ENCODE measurements at regions of chr2 and their contacts with region 1.

Region 1: DNA sequence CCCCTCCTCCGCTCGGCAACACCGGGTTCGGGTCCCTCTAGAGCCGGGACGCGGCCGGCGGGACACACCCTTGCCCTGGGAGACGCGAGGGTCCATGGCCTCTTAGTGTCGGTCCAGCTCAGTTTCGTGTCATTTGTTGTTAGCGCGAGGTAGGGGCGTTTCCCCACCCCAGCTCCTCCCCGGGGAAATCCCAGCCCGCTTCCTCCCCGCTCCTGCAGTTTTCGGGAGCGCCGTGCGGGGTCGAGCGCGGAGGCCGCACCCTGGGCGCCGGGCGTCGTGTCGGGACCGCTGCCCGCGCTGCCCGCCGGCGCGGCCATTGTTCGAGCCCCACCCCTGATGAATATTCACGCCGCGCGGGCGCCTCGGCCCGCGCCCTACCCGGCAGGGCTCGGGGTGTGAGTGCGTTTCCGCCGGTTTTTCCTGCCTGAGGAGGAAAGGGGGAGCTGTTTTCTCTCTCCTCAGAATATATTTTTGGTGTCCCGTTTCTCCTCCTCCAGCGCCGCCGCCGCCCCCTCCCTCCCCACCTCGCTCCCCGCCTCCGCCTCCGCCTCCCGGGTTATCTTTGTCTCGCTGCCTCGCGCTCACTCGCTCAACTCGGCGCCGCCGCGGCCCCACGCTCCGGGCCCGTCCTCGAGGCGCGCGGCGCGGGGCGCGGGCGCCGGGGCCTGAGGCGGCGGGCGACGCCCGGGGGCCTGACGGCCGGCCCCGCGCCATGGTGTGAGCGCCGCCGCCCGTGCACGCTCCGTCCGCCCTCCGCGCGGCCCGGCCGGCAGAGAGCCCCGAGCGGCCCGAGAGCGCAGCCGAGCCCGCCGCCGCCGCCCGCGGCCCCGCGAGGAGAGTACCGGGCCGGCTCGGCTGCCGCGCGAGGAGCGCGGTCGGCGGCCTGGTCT is at the start of gene MAP4K4:
- DNase-seq: peak; percentile 78
- H3K4me3 Mint-ChIP-seq: peak within 1 kb of the TSS; percentile 81
- H3K27ac Mint-ChIP-seq: peak within 1 kb of the TSS; percentile 75
- H3K4me1 Mint-ChIP-seq: peaks cover 18% of the 10 kb centered on the region
- H3K27me3 Mint-ChIP-seq: peaks cover 2% of the 10 kb centered on the region
- total RNA-seq, gene MAP4K4: 71.6 to 77.5 TPM

Region 2: DNA sequence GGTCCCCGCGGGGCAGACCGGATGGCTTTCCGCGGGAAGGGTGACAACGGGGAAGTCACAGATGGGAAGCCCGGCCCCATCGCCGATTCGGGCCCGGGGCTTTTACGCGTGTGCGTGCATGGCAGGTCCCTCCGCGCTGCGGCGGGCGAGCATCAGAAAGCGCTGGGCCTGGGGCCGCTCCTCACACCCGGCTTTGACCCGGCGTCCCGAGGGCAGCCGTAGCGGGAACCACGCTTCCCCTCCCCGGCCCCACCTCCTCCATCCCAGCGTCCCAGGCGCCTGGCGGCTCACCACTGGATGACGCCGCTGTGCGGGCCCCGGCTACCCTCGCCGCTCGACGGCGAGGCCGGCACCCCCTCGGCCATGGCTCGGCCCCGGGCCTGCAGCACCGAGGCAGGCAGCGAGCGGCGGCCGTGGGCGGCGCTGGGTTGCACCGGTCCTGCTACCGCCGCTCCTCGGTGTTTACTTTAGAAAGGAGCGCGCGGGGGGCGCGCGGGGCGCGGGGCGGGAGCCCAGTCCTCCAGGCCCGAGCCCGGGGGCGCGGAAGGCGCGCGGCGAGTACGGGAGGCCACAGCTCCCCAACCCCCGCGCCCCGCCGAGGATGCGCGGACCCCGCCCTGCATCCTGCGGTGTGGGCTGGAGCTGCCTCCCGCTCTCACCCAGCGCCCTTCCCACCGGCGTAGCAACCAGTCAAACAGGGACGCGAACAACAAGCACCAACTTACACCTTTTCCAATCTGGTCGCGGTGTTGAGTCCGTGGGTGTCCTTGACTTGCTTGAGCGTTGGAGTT is 223.3 kb before region 1 on chr2:
- CTCF ChIA-PET with region 1: no interaction called
- POLR2A ChIA-PET with region 1: interaction called, 31 read pairs
- DNase-seq: peak; percentile 59
- H3K4me3 Mint-ChIP-seq: peak overlapping the region; percentile 79
- H3K27ac Mint-ChIP-seq: peak overlapping the region; percentile 93
- H3K4me1 Mint-ChIP-seq: peaks cover 40% of the 10 kb centered on the region
- H3K27me3 Mint-ChIP-seq: no peaks in the 10 kb centered on the region

Region 3: DNA sequence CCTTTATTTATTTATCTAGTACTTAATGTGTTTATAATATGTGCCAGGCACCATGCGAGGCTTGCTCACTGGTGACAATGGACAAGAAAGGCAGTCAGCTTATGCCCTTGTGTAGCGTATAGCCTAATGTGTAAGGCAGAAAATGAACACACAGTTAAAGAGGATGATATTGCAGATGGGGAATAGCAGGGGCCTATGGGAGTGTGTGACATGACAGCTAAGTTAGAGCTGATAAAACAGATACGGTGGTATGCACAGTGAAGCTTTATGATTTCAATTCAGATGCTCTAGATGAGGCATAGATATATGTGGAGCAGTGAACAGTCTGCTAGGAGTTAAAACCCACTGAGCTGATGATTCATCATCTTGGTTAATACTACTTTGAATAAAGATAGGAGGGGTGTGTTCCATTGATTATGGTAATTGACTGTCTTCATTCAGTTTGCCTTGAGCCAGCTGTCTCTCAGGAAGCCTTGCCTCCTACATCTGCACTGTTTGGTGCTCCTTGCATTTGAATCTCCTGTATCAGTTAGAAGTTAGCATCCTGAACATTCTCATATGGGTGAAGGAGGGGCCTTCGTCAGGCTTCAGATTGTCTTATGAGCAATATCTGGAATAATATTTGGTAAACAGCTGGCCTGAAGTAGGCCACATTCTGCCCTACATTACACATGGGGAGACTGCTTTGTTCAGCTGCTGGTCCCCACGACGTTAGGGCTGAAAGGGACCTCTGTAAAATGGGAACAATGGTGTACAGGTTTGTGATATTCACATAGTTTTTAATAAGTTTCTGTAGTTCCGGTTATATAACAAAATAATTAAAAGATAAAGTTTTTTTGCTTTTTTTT is 13.3 kb after region 1 on chr2:
- CTCF ChIA-PET with region 1: interaction called, 11 read pairs
- POLR2A ChIA-PET with region 1: interaction called, 64 read pairs
- DNase-seq: no peak
- H3K4me3 Mint-ChIP-seq: no peak overlapping the region
- H3K27ac Mint-ChIP-seq: peak overlapping the region; percentile 4
- H3K4me1 Mint-ChIP-seq: peaks cover 58% of the 10 kb centered on the region
- H3K27me3 Mint-ChIP-seq: no peaks in the 10 kb centered on the region

Region 4: DNA sequence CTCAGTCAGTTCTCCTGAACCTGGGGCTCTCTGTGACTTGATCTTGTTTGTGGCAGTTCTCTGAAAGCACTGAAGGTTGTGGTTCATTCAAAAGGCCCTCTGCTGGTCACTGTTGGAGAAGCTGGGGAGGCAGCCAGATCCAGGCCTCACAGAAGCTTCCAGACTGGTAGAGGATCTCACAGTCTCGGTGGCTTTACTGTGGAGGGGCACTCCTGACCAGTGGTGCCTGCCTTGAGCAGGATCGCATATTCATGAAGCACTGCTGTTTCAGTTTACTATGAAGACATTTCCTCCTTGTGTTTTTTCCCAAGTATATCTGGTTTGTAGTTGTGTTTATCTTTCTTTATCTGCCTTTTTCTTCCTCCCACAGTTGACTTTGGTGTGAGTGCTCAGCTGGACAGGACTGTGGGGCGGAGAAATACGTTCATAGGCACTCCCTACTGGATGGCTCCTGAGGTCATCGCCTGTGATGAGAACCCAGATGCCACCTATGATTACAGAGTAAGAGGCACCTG is 134.0 kb after region 1 on chr2:
- CTCF ChIA-PET with region 1: interaction called, 3 read pairs
- POLR2A ChIA-PET with region 1: interaction called, 12 read pairs
- DNase-seq: peak; percentile 69
- H3K4me3 Mint-ChIP-seq: no peak overlapping the region
- H3K27ac Mint-ChIP-seq: peak overlapping the region; percentile 57
- H3K4me1 Mint-ChIP-seq: peaks cover 52% of the 10 kb centered on the region
- H3K27me3 Mint-ChIP-seq: no peaks in the 10 kb centered on the region

Region 5: DNA sequence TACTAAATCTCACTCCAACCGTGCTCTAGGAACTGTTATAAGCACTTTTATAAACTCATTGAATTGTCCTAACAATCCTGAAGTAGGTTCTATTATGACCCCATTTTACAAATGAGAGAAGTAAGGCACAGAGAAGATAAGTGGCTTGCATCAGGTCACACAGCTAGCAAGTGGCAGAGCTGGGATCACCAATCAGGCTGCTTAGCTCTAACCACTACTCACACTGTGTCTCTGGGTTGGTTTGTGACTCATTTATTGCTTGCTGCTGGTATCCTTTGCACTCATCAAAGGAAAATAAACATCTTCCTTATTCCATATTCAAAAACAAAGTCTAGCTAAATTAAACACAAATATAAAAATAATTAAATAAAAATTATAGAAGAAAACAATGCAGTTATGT is 251.9 kb after region 1 on chr2:
- CTCF ChIA-PET with region 1: no interaction called
- POLR2A ChIA-PET with region 1: no interaction called
- DNase-seq: no peak
- H3K4me3 Mint-ChIP-seq: no peak overlapping the region
- H3K27ac Mint-ChIP-seq: no peak overlapping the region
- H3K4me1 Mint-ChIP-seq: peaks cover 5% of the 10 kb centered on the region
- H3K27me3 Mint-ChIP-seq: no peaks in the 10 kb centered on the region

Measured in activated CD4-positive, alpha-beta memory T cell treated with anti-CD3 and anti-CD28 coated beads, Interleukin-2, amount 10 ng/mL, durations not matched to agents 7 days and 5 days (primary cell).